Natural killer cell (primary cell): ENCODE measurements at regions of chr2 and their contacts with region 1.

Region 1: GRCh38 chr2:96145036-96145847 is at the start of gene DUSP2:
- DNase-seq: peak; percentile 81 to 94
- ATAC-seq: peak; percentile 51 to 75 (median 65)
- H3K4me3 ChIP-seq: peak within 1 kb of the TSS; percentile 71
- H3K4me3 Mint-ChIP-seq: peak within 1 kb of the TSS; percentile 94
- H3K27ac ChIP-seq: peak within 1 kb of the TSS; percentile 99
- H3K27ac Mint-ChIP-seq: peak within 1 kb of the TSS; percentile 92 to 94
- H3K4me1 ChIP-seq: peaks cover 74% of the 10 kb centered on the region
- H3K4me1 Mint-ChIP-seq: peaks cover 30 to 64% of the 10 kb centered on the region in 2 donors
- H3K27me3 ChIP-seq: no peaks in the 10 kb centered on the region
- H3K27me3 Mint-ChIP-seq: no peaks in the 10 kb centered on the region
- CTCF ChIP-seq: no peak
- total RNA-seq, gene DUSP2: 300 to 564 (median 432) TPM

Region 2: DNA sequence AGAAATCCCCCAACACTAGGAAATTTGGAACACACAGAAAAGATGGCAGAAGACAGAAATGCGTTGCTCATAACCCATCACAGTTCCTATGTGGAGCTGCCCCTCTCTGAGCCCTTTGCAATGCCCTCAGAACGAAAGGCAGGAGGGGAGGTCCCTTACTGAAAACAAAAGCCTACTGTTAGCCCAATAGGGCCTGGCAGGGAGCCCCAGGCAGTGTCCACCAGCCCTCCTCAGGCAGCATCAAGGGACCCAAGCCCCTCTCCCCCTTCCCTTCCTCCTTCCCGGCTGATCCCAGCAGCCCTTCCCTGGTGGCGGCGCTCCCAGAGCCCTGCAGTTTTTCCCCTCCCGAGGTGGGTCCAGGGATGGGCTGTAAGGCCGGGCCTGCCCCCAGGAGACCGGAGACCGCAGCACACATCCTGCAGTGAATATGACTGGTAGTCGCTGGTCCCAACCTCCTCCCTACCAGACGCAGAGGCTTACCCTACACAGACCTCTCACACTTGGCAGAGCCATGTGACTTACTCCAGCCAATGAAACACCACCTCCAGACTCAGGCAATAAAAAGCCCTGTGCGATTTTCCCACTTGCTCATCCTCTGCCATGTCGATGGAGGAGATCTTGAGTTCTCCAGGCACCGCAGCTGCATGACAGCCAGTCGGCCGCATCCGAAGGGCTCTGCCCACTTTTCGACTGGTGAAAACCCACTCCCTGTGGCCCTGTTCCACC is 19.4 kb after region 1 on chr2:
- intact Hi-C with region 1: loop called (anchors 1 kb)
- DNase-seq: peak in 1 of 2 donors; percentile 85
- ATAC-seq: peak; percentile 16 to 46 (median 23)
- H3K4me3 ChIP-seq: no peak overlapping the region
- H3K4me3 Mint-ChIP-seq: peak overlapping the region; percentile 75
- H3K27ac ChIP-seq: peak overlapping the region; percentile 89
- H3K27ac Mint-ChIP-seq: peak overlapping the region; percentile 78 to 99
- H3K4me1 ChIP-seq: peaks cover 54% of the 10 kb centered on the region
- H3K4me1 Mint-ChIP-seq: peaks cover 47 to 56% of the 10 kb centered on the region in 2 donors
- H3K27me3 ChIP-seq: no peaks in the 10 kb centered on the region
- H3K27me3 Mint-ChIP-seq: no peaks in the 10 kb centered on the region
- CTCF ChIP-seq: no peak

Region 3: GRCh38 chr2:96208143-96209010 is 63.1 kb after region 1 on chr2 and contains the start of gene STARD7:
- intact Hi-C with region 1: loop called (anchors 1 kb)
- DNase-seq: peak; percentile 95 to 98
- ATAC-seq: peak; percentile 82 to 94 (median 88)
- H3K4me3 ChIP-seq: peak within 1 kb of the TSS; percentile 91
- H3K4me3 Mint-ChIP-seq: peak within 1 kb of the TSS; percentile 95
- H3K27ac ChIP-seq: peak within 1 kb of the TSS; percentile 82
- H3K27ac Mint-ChIP-seq: peak within 1 kb of the TSS; percentile 88 to 97
- H3K4me1 ChIP-seq: peaks cover 30% of the 10 kb centered on the region
- H3K4me1 Mint-ChIP-seq: peaks cover 44 to 46% of the 10 kb centered on the region in 2 donors
- H3K27me3 ChIP-seq: no peaks in the 10 kb centered on the region
- H3K27me3 Mint-ChIP-seq: no peaks in the 10 kb centered on the region
- CTCF ChIP-seq: no peak
- total RNA-seq, gene STARD7: 62.6 to 106 (median 86.1) TPM

Region 4: DNA sequence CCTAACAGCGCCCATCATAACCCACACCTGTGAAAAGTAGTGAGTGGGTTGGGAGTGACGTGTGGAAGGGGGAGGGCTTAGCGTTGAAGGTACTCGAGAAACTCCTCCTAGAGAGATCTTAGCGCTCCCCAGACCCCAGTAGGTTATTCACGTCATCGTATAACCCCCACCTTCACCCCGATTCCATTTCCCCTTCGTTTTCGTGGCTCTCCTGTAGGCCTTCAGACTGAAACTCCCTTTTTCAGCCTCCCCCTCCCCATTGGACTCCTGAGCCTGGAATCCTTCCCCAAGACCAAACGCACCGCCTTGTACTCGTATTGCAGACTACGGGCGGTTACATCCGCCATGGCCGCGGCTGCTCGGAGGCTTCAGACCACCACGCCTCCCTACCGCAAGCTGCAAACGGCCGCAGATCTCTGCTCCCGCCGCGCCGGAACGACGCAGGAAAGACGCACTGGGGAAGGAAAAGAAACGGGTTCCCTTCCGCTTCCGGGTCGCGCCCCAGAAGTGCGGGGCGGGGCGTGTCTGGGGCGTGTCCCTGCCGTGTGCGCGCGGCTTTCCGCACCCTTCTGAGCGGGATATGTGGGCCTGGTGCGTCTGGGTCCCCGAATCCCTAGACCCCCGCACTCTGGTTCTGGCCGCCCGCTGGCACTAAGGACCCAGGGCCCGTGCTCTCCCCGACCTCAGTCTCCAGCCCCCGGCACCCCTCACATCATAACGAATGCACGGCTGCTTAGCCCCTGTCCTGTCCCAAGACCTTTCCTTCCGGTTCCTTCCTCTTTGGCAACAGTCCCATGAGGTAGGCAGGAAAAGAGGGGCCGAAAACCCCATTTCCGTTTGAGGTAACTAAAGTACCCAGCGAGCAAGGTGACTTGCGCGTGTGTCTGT is 160.1 kb after region 1 on chr2 and contains the start of gene SNRNP200:
- intact Hi-C with region 1: loop called (anchors 5 kb)
- DNase-seq: peak; percentile 83 to 96
- ATAC-seq: peak; percentile 90 to 95 (median 90)
- H3K4me3 ChIP-seq: peak within 1 kb of the TSS; percentile 91
- H3K4me3 Mint-ChIP-seq: peak within 1 kb of the TSS; percentile 98
- H3K27ac ChIP-seq: peak within 1 kb of the TSS; percentile 94
- H3K27ac Mint-ChIP-seq: peak within 1 kb of the TSS; percentile 97 to 99
- H3K4me1 ChIP-seq: peaks cover 24% of the 10 kb centered on the region
- H3K4me1 Mint-ChIP-seq: peaks cover 55 to 56% of the 10 kb centered on the region in 2 donors
- H3K27me3 ChIP-seq: no peaks in the 10 kb centered on the region
- H3K27me3 Mint-ChIP-seq: no peaks in the 10 kb centered on the region
- CTCF ChIP-seq: no peak
- total RNA-seq, gene SNRNP200: 207 to 236 (median 228) TPM